Right cardiac atrium (tissue), 5 donors: ENCODE measurements at regions of chr1 and their contacts with region 1.

Region 1: DNA sequence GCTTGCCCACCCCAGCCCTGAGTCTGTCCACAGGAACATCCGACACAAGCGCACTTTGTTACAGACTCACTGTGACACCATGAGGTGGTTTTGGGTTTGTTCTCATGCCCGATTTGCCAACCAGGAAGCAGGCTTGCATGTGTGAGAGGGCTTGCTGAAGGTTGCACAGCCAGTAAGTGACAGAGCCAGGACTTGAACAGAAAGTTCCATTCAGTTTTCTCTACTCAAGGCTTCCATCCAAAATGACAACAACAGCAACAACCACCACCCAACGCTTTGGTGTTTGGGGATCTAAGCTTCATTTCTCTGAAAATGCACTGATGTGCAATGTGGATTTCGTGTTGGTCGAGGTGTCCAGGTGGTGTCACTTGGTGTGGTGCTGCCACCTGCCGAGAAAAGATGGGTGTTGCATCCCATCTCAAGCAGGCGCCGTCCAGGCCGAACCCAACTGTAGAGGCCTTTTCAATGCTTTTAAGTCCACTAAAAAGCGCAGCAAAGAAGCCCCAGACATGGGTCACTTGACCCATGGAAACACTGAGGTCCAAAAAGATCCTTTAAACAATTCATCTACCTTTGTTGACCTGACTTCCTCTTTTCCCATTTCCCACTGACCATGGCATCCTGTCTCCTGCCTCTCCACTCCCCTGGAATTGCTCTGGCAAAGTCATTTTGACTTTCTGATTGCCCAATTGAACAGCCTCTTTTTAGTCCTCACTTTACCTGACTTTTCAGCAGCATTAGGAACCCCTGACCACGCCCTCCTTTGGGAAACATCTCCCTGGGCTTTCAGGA is 12.2 kb downstream of the CITED4 start:
- DNase-seq: peak; percentile 64 to 87 (median 85)
- ATAC-seq: peak; percentile 77 to 79
- H3K4me3 ChIP-seq: no peak overlapping the region
- H3K27ac ChIP-seq: no peak overlapping the region
- H3K4me1 ChIP-seq: no peaks in the 10 kb centered on the region
- H3K27me3 ChIP-seq: no peaks in the 10 kb centered on the region

Region 2: DNA sequence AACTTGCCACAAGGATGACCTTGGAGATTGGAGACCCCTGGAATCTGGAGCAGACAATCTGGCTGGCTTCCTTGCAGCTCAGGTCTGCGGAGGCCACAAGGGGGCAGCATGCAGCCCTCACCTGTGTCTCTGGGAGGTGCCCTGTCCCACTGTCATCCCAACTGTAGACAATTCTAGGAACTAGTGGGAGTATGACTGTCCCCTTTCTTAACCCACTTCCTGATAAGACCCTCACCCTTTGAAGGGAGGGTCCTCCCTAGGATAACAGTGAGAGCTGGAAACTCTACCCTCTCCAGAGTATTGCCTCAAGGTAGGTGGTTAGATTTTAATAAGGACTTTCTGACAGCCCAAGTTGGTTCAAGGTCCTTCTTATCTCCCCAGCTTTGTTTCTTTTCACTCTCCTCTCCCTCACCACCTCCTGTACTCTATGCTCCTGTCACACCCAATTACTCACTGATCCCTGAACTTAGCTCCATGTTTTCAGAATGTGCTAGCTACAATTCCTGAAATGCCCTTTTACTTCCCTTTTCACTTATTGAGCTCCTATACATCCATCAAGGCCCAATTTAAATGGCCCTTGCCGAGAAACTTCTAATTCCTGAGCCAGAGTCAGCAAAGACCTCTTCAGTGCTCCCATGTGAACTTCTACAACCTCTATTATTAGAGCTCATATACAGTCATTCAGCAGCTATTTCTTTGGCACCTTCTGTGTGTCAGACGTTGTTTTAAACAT is 75.6 kb before region 1 on chr1:
- intact Hi-C with region 1: loop called in 1 of 4 experiments (anchors 10 kb)
- DNase-seq: peak; percentile 43 to 85 (median 74)
- ATAC-seq: peak; percentile 40 to 44
- H3K4me3 ChIP-seq: no peak overlapping the region
- H3K27ac ChIP-seq: no peak overlapping the region
- H3K4me1 ChIP-seq: no peaks in the 10 kb centered on the region
- H3K27me3 ChIP-seq: no peaks in the 10 kb centered on the region